ENCODE measurements at regions of chr17 and their contacts with region 1.

Region 1: GRCh38 chr17:40358323-40359038 is 6.1 kb downstream of the GJD3 start:
- DNase-seq: peak; percentile 87
- ATAC-seq: peak; percentile 70
- H3K4me3 ChIP-seq: peak overlapping the region; percentile 59
- H3K27ac ChIP-seq: no peak overlapping the region
- H3K4me1 ChIP-seq: no peaks in the 10 kb centered on the region
- H3K27me3 ChIP-seq: no peaks in the 10 kb centered on the region
- CTCF ChIP-seq: peak; percentile 81

Region 2: GRCh38 chr17:40417609-40418427 is 59.3 kb after region 1 on chr17 and contains the start of gene TOP2A:
- CTCF ChIA-PET with region 1: no interaction called
- POLR2A ChIA-PET with region 1: no interaction called
- intact Hi-C with region 1: loop called (anchors 2 kb)
- DNase-seq: peak; percentile 100
- ATAC-seq: peak; percentile 94
- H3K4me3 ChIP-seq: peak within 1 kb of the TSS; percentile 91
- H3K27ac ChIP-seq: peak within 1 kb of the TSS; percentile 61
- H3K4me1 ChIP-seq: peaks cover 14% of the 10 kb centered on the region
- H3K27me3 ChIP-seq: no peaks in the 10 kb centered on the region
- CTCF ChIP-seq: no peak
- total RNA-seq, gene TOP2A: 97.1 and 104 TPM in 2 replicates

Measured in PC-3 (cell line).